Right ventricle myocardium superior (tissue), 1 donor: ENCODE measurements at regions of chr4 and their contacts with region 1.

Region 1: GRCh38 chr4:52038103-52038912 is at the start of gene SGCB:
- DNase-seq: peak; percentile 79
- ATAC-seq: peak; percentile 94
- total RNA-seq, gene SGCB: 74.6 TPM

Region 2: DNA sequence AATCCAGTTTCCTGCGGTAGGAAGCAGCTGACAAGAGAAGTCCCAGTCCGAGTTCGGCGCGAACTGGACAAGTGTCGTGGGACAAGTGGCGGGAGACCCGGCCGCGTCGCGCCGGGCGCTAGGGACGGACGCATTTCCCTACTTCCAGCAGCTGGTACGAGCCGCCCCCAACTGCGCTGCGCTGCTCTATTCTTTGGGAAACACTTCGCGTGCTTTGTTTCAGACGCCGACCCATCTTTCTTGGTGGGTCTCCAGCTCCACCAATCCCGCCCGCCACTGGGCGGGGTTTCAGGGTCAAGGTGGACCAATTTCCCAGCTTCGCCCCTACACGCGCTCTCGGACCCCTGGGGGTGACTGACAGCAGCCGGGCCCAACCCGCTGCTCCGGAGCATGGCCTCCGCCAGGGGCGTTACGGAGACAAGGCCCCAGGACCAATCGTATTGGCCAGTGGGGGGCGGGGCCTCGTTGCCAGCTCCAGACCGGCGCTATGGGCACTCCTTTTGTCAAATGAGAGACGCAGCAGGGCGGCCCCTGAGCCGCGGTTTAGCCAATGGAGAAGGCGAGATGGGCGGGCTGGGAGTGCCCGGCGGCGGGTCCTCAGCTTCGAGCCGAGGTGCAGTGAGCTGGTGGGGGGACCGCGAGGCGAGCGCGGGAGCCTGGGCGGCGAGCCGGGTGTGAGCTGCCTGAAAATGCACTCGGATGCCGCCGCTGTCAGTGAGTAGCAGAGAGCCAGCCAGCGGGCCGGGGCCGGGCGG is 195.6 kb before region 1 on chr4 and contains the start of gene DCUN1D4:
- intact Hi-C with region 1: loop called (anchors 10 kb)
- DNase-seq: peak; percentile 100
- ATAC-seq: peak; percentile 92
- total RNA-seq, gene DCUN1D4: 35.2 TPM

Region 3: DNA sequence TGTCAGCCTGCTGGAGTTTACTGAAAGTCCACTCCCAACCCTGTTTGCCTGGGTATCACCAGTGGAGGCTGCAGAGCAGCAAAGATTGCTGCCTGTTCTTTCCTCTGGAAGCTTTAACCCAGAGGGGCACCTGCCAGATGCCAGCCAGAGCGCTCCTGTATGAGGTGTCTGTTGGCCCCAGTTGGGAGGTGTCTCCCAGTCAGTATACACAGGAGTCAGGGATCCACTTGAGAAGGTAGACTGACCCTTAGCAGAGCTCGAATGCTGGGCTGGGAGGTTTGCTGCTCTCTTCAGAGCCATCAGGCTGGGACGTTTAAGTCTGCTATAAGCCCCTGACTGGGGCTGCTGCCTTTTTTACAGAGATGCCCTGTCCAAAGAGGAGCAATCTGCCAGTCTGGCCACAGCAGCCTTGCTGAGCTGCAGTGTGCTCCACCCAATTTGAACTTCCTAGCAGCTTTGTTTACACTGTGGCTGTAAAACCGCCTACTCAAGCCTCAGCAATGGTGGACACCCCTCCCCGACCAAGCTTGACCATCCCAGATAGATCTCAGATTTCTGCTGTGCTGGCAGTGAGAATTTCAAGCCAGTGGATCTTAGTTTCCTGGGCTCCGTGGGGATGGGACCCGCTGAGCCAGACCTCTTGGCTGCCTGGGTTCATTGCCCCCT is 53.4 kb after region 1 on chr4:
- intact Hi-C with region 1: no loop called
- DNase-seq: no peak
- ATAC-seq: no peak

Region 4: DNA sequence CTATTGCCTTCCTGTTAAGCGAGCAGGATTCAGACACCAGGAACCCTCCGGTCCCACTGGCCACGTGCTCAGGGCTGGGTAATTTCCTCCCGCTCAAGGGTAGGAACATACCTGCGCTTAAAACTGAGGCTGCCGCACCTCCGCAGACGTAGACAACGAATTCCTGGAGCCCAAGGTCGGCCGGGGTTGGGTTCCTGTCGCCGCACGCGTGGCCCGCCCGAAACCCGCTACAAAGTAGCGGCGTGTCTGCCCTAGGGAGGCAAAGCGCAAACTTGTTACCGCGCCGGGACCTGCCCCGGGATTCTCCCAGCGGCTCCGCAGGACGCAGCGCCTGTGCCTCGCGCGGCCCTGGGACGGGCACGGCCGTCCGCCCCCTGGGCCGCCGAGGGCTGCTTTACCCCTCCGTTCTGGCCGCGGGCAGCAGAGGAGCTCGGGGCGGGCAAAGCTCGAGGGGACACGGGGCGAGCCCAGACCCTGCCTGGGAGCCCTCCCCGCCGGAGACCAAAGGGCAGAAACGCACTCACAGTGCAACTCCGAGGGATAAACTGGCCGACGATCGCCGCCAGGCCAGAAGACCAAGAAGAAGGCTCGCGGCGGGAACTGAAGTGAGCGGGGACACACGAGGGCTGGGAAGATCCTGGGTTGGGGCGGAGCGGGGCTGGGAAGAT is 712.6 kb after region 1 on chr4 and contains the start of gene ERVMER34-1:
- intact Hi-C with region 1: no loop called
- DNase-seq: peak; percentile 46
- ATAC-seq: peak; percentile 77
- total RNA-seq, gene ERVMER34-1: 4.5 TPM